Mammary epithelial cell (primary cell): ENCODE measurements at regions of chr2 and their contacts with region 1.

Region 1: GRCh38 chr2:238771218-238771617 is 76.7 kb upstream of the TWIST2 start:
- DNase-seq: no peak
- H3K4me3 ChIP-seq: no peak overlapping the region
- H3K27ac ChIP-seq: no peak overlapping the region
- H3K4me1 ChIP-seq: no peaks in the 10 kb centered on the region
- H3K27me3 ChIP-seq: no peaks in the 10 kb centered on the region
- CTCF ChIP-seq: peak; percentile 6 to 32

Region 2: GRCh38 chr2:238523158-238524110 is 247.8 kb before region 1 on chr2:
- CTCF ChIA-PET with region 1: no interaction called
- dilution Hi-C with region 1: loop called (anchors 25 kb)
- in situ Hi-C with region 1: loop called (anchors 10 to 25 kb)
- intact Hi-C with region 1: no loop called
- DNase-seq: no peak
- H3K4me3 ChIP-seq: no peak overlapping the region
- H3K27ac ChIP-seq: no peak overlapping the region
- H3K4me1 ChIP-seq: no peaks in the 10 kb centered on the region
- H3K27me3 ChIP-seq: no peaks in the 10 kb centered on the region
- CTCF ChIP-seq: no peak